Right cardiac atrium (tissue), 5 donors: ENCODE measurements at regions of chr17 and their contacts with region 1.

Region 1: DNA sequence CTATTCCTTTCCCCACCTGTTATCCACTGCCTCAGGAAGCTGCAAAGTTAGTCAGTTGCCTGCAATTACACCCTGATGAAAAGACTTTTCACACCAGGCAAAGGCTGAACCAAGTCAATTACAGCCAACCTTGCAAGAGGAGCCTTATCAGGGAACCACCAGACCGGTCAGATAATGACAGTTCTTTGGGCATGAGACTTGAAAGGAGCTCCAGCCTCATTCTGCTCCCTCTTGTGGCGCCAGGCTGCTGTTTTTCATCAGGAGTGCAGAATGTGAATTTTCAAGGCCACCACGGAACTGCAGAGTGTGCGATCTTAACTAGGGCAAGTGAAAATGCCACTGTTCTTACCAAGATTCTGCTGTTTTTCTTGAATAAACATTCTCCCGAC is 22.5 kb downstream of the DNAI2 start:
- DNase-seq: peak; percentile 73 to 91 (median 82)
- ATAC-seq: peak; percentile 72 to 84
- H3K4me3 ChIP-seq: no peak overlapping the region
- H3K27ac ChIP-seq: peak overlapping the region; percentile 92
- H3K4me1 ChIP-seq: peaks cover 3% of the 10 kb centered on the region
- H3K27me3 ChIP-seq: no peaks in the 10 kb centered on the region

Region 2: DNA sequence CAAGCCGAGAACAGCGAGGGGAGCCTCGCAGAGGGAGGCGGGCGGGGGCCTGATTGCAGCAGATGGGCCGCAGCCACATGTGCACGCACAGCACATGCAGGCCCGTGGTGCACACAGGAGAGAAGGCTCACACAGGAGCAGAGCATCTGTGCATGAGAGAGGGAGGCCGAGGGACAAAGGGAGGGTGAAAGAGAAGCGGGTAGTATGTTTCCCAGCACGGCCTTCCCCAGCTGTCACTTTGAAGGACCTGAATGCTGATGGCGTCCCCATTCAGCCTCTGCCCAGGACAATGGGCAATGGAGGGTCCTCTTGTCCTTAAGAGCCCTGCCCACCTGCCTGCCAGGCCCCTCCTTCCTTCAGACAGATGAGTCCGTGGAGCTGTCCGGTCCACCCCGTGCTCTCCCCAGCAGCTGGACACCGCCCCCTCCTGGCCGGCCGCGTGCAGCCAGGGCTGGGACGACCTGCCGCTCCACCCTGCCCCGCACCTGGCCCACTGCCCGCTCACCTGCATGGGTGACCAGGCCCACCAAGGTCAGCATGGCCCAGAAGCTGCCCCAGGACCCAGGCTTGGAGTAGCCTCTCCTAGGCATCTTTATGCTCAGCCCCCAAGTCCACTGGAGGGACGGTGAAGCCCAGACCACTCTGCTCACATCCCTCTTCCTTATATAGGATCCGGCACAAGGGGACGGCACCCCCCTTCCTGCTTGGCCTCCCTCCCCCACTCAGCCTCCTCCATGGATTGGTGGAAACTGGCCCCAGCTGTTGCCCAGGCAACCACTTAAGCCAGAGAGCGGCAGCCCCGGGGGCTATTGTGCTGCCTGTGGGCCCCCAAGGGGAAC is 64.9 kb after region 1 on chr17 and contains the start of gene BTBD17:
- intact Hi-C with region 1: loop called in 3 of 4 experiments (anchors 2 to 5 kb)
- DNase-seq: peak; percentile 58 to 88 (median 85)
- ATAC-seq: peak; percentile 80 to 85
- H3K4me3 ChIP-seq: no peak within 1 kb of the TSS
- H3K27ac ChIP-seq: no peak within 1 kb of the TSS
- H3K4me1 ChIP-seq: no peaks in the 10 kb centered on the region
- H3K27me3 ChIP-seq: no peaks in the 10 kb centered on the region
- total RNA-seq, gene BTBD17: not detected